PC-3 (cell line): ENCODE measurements at regions of chr20 and their contacts with region 1.

Region 1: GRCh38 chr20:50790651-50791277 is 4.1 kb upstream of the BCAS4 start:
- DNase-seq: peak; percentile 96
- ATAC-seq: peak; percentile 83
- H3K4me3 ChIP-seq: peak overlapping the region; percentile 47
- H3K27ac ChIP-seq: peak overlapping the region; percentile 70
- H3K4me1 ChIP-seq: peaks cover 24% of the 10 kb centered on the region
- H3K27me3 ChIP-seq: no peaks in the 10 kb centered on the region
- CTCF ChIP-seq: peak; percentile 88

Region 2: DNA sequence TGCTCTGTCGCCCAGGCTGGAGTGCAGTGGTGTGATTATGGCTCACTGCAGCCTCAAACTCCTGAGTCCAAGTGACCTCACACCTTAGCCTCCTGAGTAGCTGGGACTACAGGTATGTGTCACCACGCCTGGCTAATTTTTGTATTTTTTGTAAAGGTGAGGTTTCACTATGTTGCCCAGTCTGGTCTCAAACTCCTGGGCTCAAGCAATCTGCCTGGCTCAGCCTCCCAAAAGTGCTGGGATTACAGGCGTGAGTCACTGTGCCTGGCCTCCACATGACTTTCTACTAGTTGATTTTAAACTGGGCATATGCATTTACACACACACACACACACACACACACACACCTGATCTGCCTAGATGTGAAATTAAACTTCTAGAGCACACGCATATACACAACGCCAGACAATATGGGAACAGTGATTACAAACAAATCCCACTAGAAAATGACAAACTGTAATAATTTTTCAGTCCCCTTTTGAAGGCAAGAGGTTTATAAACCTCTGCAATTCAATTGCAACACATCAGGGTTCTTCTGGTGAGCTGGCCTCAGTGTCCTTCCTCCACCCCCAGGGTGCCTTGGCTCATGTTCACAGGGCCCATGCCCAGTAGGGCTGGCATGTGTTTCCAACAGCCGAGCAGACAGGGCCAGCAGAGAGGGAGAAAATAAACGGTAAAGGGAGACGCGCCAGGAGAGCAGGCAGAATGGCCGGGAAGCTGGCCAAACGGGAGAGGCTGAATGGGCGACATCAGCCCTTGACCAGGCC is 28.1 kb before region 1 on chr20:
- CTCF ChIA-PET with region 1: interaction called, 4 read pairs
- POLR2A ChIA-PET with region 1: interaction called, 22 read pairs
- intact Hi-C with region 1: no loop called
- DNase-seq: peak; percentile 74
- ATAC-seq: peak; percentile 56
- H3K4me3 ChIP-seq: peak overlapping the region; percentile 15; the same call in 1 of the 2 replicates
- H3K27ac ChIP-seq: peak overlapping the region; percentile 89
- H3K4me1 ChIP-seq: peaks cover 40% of the 10 kb centered on the region
- H3K27me3 ChIP-seq: no peaks in the 10 kb centered on the region
- CTCF ChIP-seq: no peak

Region 3: GRCh38 chr20:50817776-50818172 is 27.0 kb after region 1 on chr20:
- CTCF ChIA-PET with region 1: no interaction called
- POLR2A ChIA-PET with region 1: no interaction called
- intact Hi-C with region 1: loop called (anchors 1 kb)
- DNase-seq: no peak
- ATAC-seq: no peak
- H3K4me3 ChIP-seq: no peak overlapping the region
- H3K27ac ChIP-seq: no peak overlapping the region
- H3K4me1 ChIP-seq: peaks cover 7% of the 10 kb centered on the region; the same call in 1 of the 2 replicates
- H3K27me3 ChIP-seq: no peaks in the 10 kb centered on the region
- CTCF ChIP-seq: no peak

Region 4: DNA sequence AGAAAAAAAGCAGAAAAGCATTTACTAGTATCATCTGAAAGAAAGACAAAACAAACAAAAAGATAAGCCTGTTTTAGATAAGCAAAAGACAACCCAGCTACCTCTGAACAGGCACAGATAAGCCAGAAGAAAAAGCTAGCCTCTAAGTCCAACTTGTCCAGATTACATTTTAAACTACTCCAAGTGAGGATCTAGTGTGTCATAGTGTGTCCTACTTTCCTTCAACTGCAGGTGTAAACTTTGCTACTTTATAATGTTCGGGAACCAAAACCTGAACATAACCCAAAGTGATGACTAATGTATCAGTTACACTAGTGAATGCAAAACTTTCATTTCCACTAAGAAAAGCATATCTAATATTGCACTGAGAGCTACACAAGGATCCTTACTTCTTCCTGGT is 121.0 kb after region 1 on chr20:
- CTCF ChIA-PET with region 1: interaction called, 10 read pairs
- POLR2A ChIA-PET with region 1: no interaction called
- intact Hi-C with region 1: no loop called
- DNase-seq: no peak
- ATAC-seq: no peak
- H3K4me3 ChIP-seq: no peak overlapping the region
- H3K27ac ChIP-seq: no peak overlapping the region
- H3K4me1 ChIP-seq: peaks cover 25% of the 10 kb centered on the region
- H3K27me3 ChIP-seq: no peaks in the 10 kb centered on the region
- CTCF ChIP-seq: no peak

Region 5: DNA sequence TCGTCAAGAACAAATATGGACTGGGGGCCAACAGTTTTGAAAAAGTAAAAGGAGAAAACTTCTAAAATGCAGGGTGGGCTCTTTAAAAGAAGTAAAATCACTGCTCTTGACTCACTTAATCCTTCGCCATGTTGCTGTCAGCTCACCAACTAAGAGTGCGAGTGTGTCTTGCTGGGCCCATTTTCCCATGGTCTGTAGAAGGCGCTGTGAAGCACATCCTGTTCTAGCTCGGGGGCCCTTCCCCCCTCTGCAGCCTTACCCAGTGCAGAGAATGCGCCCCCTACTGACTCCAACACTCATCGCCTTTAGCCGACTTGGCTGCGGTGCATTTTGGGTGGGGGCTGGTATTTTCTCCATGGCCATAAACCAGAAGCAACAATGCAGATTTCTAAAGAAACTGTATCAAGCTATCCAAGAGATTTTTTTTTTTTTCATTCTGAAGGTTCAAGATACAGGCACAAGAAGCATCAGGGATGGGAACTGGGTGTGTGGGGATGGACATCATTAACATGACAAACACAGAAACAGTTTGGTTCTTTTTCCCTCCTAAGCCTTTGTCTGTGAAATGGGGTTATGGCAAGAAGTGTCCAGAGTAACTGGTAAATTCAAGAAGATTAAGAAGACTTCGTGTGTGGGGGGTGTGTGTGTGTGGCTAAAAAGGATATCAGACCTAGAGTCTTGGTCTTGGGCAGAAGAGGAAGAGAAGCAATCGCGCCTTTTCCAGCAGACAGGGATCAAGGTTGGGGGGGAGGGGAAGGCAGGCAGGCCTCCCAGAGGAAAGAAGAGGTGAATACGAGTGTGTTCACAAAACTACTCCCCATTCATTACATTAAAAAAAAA is 138.8 kb after region 1 on chr20:
- CTCF ChIA-PET with region 1: interaction called, 11 read pairs
- POLR2A ChIA-PET with region 1: interaction called, 4 read pairs
- intact Hi-C with region 1: loop called (anchors 2 kb)
- DNase-seq: peak; percentile 92
- ATAC-seq: peak; percentile 34
- H3K4me3 ChIP-seq: peak overlapping the region; percentile 92
- H3K27ac ChIP-seq: peak overlapping the region; percentile 12
- H3K4me1 ChIP-seq: peaks cover 31% of the 10 kb centered on the region
- H3K27me3 ChIP-seq: no peaks in the 10 kb centered on the region
- CTCF ChIP-seq: peak; percentile 99

Region 6: GRCh38 chr20:50980851-50981713 is 190.3 kb after region 1 on chr20:
- CTCF ChIA-PET with region 1: interaction called, 5 read pairs
- POLR2A ChIA-PET with region 1: no interaction called
- intact Hi-C with region 1: loop called (anchors 2 kb)
- DNase-seq: peak; percentile 94
- ATAC-seq: peak; percentile 27
- H3K4me3 ChIP-seq: peak overlapping the region; percentile 20; the same call in 1 of the 2 replicates
- H3K27ac ChIP-seq: peak overlapping the region; percentile 87
- H3K4me1 ChIP-seq: peaks cover 40% of the 10 kb centered on the region
- H3K27me3 ChIP-seq: no peaks in the 10 kb centered on the region
- CTCF ChIP-seq: peak; percentile 99

Region 7: DNA sequence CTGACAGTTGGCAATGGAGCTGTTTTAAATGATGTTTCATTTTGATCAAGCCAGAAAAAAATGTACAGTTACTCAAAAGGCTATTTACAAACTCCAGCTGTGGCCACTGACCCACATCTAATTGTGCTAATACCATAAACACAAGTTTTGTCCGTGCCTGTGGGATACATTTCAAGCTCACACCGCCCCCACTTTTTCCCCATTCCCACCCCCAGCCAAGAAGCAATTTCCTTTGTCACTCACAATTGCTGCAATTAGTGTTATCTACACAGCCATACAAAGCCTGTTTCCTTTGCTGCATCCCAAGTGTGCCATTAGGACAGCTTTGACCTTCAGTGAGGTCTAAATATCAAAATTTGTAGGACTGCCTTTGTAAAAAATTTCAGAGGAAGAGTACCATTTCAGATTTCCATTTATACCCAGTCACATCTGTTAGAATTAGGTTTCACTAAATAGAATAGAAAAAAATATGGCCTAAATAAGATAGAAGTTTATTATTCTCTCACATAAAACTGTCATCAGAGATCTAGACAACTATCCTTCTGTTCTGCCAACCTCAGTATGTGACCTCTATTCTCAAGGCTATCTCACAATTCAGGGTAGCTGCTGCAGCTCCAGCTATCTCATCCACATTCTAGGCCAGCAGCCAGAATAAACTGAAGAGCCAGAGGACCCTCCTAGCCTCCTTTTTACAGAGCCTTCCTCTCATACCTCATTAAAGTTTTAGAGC is 549.1 kb after region 1 on chr20:
- CTCF ChIA-PET with region 1: interaction called, 11 read pairs
- POLR2A ChIA-PET with region 1: no interaction called
- intact Hi-C with region 1: no loop called
- DNase-seq: no peak
- ATAC-seq: no peak
- H3K4me3 ChIP-seq: no peak overlapping the region
- H3K27ac ChIP-seq: no peak overlapping the region
- H3K4me1 ChIP-seq: peaks cover 26% of the 10 kb centered on the region
- H3K27me3 ChIP-seq: no peaks in the 10 kb centered on the region
- CTCF ChIP-seq: no peak